ENCODE measurements at regions of chr9 and their contacts with region 1.

Region 1: DNA sequence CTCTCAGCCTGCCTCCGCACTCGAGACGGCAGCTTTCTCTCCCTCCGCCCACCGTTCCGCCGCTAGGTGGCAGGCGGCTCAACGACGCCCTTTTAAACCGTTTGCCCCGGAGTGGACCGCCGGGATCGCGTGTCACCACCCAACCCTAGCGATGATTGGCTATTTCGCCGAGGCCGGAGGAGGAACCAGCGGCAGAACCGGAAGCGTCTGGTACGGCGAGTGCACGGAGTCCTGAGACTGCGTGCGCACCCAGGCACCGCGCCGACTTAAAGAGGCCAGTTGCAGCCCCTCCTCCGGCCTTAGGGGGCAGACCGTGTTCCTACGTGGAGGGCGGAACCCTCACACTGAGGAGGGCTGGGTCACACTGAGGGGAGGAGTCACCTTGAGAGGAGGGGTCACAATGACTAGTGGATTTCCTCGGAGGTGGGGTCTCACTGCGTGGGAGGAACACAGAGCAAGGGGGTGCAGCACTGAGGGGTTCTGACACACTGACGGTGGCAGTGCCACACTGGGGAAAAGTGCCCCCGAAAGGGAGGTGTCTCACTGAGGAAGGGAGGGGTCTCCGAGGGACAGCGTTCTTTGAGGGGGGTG is 980 bp upstream of the TESK1 start:
- DNase-seq: peak; percentile 98 to 99 (median 99)
- H3K4me3 ChIP-seq: peak overlapping the region; percentile 75 to 84
- H3K4me3 Mint-ChIP-seq: peak overlapping the region; percentile 95 to 100 (median 98)
- H3K27ac ChIP-seq: peak overlapping the region; percentile 85
- H3K27ac Mint-ChIP-seq: peak overlapping the region; percentile 96 to 100 (median 99)
- H3K4me1 ChIP-seq: peaks cover 37% of the 10 kb centered on the region
- H3K4me1 Mint-ChIP-seq: peaks cover 25 to 47% (median 32%) of the 10 kb centered on the region in 4 donors
- H3K27me3 ChIP-seq: no peaks in the 10 kb centered on the region
- H3K27me3 Mint-ChIP-seq: no peaks in the 10 kb centered on the region

Region 2: GRCh38 chr9:34646211-34647083 is 957.6 kb before region 1 on chr9 and contains the start of gene GALT:
- CTCF ChIA-PET with region 1: no interaction called
- POLR2A ChIA-PET with region 1: no interaction called
- intact Hi-C with region 1: loop called (anchors 1 kb)
- DNase-seq: peak; percentile 92 to 96 (median 94)
- H3K4me3 ChIP-seq: peak within 1 kb of the TSS; percentile 83 to 87
- H3K4me3 Mint-ChIP-seq: peak within 1 kb of the TSS; percentile 93 to 97 (median 95)
- H3K27ac ChIP-seq: peak within 1 kb of the TSS; percentile 84
- H3K27ac Mint-ChIP-seq: peak within 1 kb of the TSS; percentile 89 to 96 (median 93)
- H3K4me1 ChIP-seq: peaks cover 28% of the 10 kb centered on the region
- H3K4me1 Mint-ChIP-seq: peaks cover 23 to 49% (median 31%) of the 10 kb centered on the region in 4 donors
- H3K27me3 ChIP-seq: no peaks in the 10 kb centered on the region
- H3K27me3 Mint-ChIP-seq: no peaks in the 10 kb centered on the region
- total RNA-seq, gene GALT: 251 to 261 TPM

Region 3: DNA sequence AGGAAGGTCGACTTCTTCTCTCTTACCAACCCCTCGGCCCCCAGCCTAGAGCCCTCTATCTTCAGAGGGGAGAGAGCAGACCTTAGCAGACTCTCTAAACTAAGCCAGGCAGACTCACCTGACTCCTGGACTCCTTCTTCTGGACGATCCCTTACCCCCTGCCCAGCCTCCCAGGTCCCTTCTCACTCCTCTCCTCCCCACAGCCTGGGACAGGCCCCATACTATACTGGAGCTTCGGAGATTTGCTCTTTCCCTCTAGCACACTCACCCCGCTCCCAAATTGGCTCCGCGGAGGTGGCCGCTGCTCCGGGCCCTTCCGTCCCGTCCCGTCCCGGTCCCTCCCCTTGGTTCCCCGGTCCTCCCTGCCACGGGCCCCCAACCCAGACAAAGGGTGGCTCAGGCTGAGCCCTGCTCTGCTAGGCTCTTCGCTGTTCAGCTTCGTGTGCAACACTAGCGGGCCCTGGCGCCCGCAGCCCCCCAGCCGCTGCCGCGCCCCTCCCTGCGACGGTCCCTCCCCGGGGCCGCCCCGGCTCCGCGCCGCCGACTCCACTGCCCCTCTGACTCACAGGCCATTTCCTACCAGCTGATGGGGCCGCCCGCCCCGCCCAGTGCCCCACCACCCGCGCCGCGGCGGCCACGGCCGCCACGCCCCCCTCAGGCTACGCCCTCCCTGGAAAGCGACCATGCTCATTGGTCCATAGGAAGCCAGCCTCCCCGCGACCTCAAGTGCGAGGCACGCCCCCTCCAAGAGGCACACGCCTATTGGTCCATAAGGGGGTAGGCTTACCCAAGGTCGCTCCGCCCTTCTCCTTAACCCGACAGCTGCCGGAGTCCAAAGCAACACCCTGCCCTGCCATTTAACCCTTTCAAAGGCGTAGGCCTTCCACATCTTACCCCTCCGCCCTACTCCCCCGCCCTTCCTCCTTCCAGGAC is 492.8 kb before region 1 on chr9:
- CTCF ChIA-PET with region 1: no interaction called
- POLR2A ChIA-PET with region 1: no interaction called
- intact Hi-C with region 1: loop called (anchors 1 kb)
- DNase-seq: peak; percentile 91 to 98 (median 94)
- H3K4me3 ChIP-seq: peak overlapping the region; percentile 47 to 54
- H3K4me3 Mint-ChIP-seq: peak overlapping the region; percentile 67 to 94 (median 81)
- H3K27ac ChIP-seq: peak overlapping the region; percentile 82
- H3K27ac Mint-ChIP-seq: peak overlapping the region; percentile 88 to 96 (median 91)
- H3K4me1 ChIP-seq: peaks cover 52% of the 10 kb centered on the region
- H3K4me1 Mint-ChIP-seq: peaks cover 41 to 63% (median 47%) of the 10 kb centered on the region in 4 donors
- H3K27me3 ChIP-seq: no peaks in the 10 kb centered on the region
- H3K27me3 Mint-ChIP-seq: no peaks in the 10 kb centered on the region

Region 4: DNA sequence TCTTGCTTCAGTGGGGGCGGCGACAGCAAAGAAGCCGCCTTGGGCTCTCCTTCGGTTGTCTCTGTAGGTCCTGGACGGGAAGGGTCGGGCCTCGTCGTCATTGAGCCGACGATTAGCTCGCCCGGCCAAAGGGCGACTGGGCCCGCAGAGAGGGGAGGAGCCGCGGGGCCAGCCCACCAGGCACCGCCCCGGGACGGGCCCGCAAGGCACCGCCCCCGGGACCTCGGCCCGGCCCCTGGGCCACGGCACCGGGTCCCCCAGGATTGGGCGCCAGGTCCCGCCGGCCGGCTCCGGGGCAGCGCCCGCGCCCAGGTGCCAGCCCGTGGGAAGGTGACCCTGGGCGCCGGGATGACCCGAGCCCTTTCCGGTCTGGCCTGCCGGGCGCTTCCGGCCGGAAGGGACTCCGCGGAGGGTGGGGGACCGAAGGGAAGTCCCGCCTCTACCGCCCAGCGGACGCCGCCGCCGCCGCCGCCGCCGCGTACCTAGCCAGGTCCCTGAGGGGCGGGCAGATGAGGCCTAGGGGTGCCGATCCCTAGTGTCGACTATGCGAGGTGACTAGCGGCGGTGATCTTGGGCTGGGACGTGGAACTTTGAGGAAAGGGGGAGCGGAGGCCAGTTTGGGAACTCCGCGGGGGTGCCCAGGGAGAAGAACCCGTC is 144.9 kb after region 1 on chr9 and contains the starts of genes GBA2 and RGP1:
- CTCF ChIA-PET with region 1: interaction called, 5 read pairs
- POLR2A ChIA-PET with region 1: interaction called, 7 read pairs
- intact Hi-C with region 1: loop called (anchors 1 kb)
- DNase-seq: peak; percentile 50 to 71 (median 62)
- H3K4me3 ChIP-seq: peak within 1 kb of the TSS; percentile 89 to 92
- H3K4me3 Mint-ChIP-seq: peak within 1 kb of the TSS; percentile 92 to 97 (median 94)
- H3K27ac ChIP-seq: peak within 1 kb of the TSS; percentile 82
- H3K27ac Mint-ChIP-seq: peak within 1 kb of the TSS; percentile 87 to 97 (median 96)
- H3K4me1 ChIP-seq: peaks cover 45% of the 10 kb centered on the region
- H3K4me1 Mint-ChIP-seq: peaks cover 37 to 73% (median 51%) of the 10 kb centered on the region in 4 donors
- H3K27me3 ChIP-seq: no peaks in the 10 kb centered on the region
- H3K27me3 Mint-ChIP-seq: no peaks in the 10 kb centered on the region
- total RNA-seq, gene GBA2: 61.1 to 66.3 TPM
- total RNA-seq, gene RGP1: 31.8 to 33.8 TPM

Region 5: DNA sequence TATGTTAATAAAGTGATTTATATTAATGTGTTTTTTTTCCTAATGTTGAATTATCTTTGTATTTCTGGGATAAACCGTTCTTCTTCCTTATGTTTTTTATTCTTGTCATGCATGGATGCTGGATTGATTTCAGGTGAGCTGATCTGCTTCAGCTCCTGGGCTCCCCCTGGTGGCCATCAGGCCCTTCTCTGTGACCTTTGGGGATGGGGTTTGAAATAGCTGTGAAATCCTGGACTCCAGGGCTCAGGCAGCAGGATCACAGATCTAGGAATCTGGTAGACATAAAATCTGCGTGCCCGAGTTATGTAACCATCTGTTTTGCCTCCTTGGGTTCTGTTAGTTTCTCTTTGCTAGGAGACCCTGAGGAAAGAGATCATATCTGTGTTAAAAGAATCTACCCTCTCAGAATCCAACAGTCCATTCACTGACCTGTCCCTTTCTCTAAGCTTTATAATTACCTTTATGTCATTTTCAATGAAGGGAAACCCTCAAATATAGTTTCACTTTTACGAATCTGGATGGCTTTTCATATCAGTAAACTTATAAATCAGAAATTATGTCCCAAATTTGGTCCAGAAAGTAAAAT is 278.3 kb after region 1 on chr9:
- CTCF ChIA-PET with region 1: interaction called, 4 read pairs
- POLR2A ChIA-PET with region 1: interaction called, 3 read pairs
- intact Hi-C with region 1: loop called (anchors 2 kb)
- DNase-seq: peak; percentile 70 to 75 (median 71)
- H3K4me3 ChIP-seq: no peak overlapping the region
- H3K4me3 Mint-ChIP-seq: no peak overlapping the region
- H3K27ac ChIP-seq: no peak overlapping the region
- H3K27ac Mint-ChIP-seq: no peak overlapping the region
- H3K4me1 ChIP-seq: no peaks in the 10 kb centered on the region
- H3K4me1 Mint-ChIP-seq: no peaks in the 10 kb centered on the region
- H3K27me3 ChIP-seq: no peaks in the 10 kb centered on the region
- H3K27me3 Mint-ChIP-seq: peaks cover 2 to 8% of the 10 kb centered on the region in 2 donors